CD8-positive, alpha-beta T cell (primary cell): ENCODE measurements at regions of chr2 and their contacts with region 1.

Region 1: DNA sequence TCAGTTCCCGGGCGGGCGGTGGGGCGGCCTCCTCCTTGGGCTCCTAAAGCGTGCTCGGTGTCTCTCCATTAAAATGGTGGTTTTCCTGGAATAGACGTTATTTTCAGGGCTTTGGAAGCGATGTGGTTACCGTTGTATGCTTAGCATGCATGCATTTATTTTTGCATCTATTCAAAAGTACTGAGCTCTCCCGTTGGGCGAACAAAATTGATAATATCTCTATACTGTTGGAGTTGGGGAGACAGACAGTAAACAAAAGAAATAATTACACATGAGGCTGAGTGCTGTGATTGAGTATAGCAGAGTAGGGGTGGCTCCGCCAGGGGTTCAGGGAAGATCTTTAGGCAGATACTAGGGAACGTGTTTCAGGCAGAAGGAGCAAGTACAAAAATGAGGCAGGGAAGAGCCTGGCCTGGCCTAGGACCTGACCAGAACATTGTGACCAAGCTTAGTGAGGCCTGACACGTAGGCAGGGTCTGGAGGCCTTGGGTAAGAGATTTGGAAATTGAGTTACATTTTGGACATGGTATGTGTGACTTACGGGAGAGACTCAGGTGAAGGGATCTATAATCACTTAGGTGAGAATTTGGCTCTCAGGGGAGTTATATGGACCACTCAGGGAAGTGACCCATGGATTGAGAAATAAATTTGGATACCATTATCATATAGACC is 674 bp downstream of the NCAPH start:
- DNase-seq: no peak
- ATAC-seq: no peak
- H3K4me3 ChIP-seq: peak overlapping the region; percentile 42 to 83
- H3K4me3 Mint-ChIP-seq: peak overlapping the region; percentile 85
- H3K27ac ChIP-seq: no peak overlapping the region
- H3K27ac Mint-ChIP-seq: peak overlapping the region; percentile 63
- H3K4me1 ChIP-seq: peaks cover 14% of the 10 kb centered on the region
- H3K4me1 Mint-ChIP-seq: peaks cover 29% of the 10 kb centered on the region
- H3K27me3 ChIP-seq: no peaks in the 10 kb centered on the region
- H3K27me3 Mint-ChIP-seq: no peaks in the 10 kb centered on the region
- CTCF ChIP-seq: no peak

Region 2: DNA sequence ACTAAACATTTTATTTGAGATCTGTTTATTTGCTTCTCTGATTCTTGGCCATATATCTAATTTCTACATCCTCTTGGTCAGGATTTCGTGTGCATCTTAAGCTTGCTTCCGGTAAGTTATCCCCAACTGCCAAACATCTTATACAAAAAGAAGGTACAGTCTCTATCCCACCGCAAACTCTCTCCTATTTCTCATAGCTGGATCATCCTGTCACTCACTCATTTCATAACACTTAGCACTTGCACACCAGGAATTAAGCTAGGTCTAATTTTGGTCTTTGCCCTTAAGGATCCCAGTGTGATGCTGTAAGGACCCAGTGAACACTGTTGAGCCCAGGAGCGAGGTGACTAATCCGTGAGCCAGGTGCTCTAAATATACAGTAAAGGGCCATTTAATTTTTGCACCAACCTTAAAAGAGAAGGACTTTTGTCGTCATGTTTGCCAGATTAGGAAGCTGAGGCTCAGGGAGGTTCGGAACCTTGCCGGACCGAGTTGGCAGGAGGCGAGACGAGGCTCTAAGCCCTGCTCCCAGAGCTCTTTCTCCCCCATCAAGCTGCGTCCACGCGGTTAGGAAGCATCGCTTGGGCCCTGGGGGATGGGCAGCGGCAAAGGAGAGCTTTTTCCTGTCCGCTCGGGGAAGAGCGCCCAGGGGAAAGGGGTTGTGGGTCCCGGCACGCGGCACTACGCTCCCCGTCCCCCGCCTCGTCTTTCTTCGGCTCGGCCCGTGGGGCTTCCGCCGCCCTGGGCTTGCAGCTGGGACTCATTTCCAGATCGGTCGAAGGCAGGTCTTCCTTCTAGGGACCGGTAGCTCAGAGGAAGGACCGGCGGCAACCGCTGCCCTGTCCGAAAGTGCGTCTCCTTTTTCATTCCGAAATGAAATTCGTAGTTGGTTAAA is 15.3 kb before region 1 on chr2:
- CTCF ChIA-PET with region 1: interaction called, 4 read pairs
- POLR2A ChIA-PET with region 1: interaction called, 25 read pairs
- intact Hi-C with region 1: loop called in 1 of 2 experiments (anchors 1 kb)
- DNase-seq: peak in 2 of 9 experiments; percentile 26 to 38
- ATAC-seq: no peak
- H3K4me3 ChIP-seq: peak overlapping the region; percentile 81 to 85
- H3K4me3 Mint-ChIP-seq: peak overlapping the region; percentile 92
- H3K27ac ChIP-seq: peak overlapping the region; percentile 38 to 71
- H3K27ac Mint-ChIP-seq: peak overlapping the region; percentile 90
- H3K4me1 ChIP-seq: peaks cover 28% of the 10 kb centered on the region
- H3K4me1 Mint-ChIP-seq: peaks cover 55% of the 10 kb centered on the region
- H3K27me3 ChIP-seq: no peaks in the 10 kb centered on the region
- H3K27me3 Mint-ChIP-seq: no peaks in the 10 kb centered on the region
- CTCF ChIP-seq: no peak

Region 3: DNA sequence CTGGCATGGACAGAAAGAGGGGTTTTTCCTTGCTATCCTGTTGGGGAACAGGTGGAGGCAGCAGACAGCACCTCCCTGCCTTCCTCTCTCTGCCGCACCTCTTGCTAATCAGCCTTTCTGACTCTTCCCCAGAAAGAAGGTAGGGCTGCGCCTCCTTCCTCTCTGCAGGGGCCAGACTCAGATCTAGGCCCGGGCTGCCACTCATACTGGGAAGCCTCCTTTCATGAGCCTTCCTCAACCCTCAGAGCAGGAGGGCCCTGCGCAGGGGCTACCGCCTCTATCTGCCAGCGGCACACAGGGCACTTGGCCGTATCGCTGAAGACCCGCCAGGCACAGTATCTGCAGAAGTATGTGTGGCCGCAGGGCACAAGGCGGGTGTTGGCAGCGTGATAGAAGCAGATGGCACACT is 161.8 kb after region 1 on chr2:
- CTCF ChIA-PET with region 1: no interaction called
- POLR2A ChIA-PET with region 1: no interaction called
- intact Hi-C with region 1: no loop called
- DNase-seq: no peak
- ATAC-seq: no peak
- H3K4me3 ChIP-seq: no peak overlapping the region
- H3K4me3 Mint-ChIP-seq: no peak overlapping the region
- H3K27ac ChIP-seq: no peak overlapping the region
- H3K27ac Mint-ChIP-seq: no peak overlapping the region
- H3K4me1 ChIP-seq: peaks cover 16% of the 10 kb centered on the region
- H3K4me1 Mint-ChIP-seq: peaks cover 8% of the 10 kb centered on the region
- H3K27me3 ChIP-seq: no peaks in the 10 kb centered on the region
- H3K27me3 Mint-ChIP-seq: peaks cover 2% of the 10 kb centered on the region
- CTCF ChIP-seq: no peak